CD14-positive monocyte (primary cell): ENCODE measurements at regions of chr2 and their contacts with region 1.

Region 1: DNA sequence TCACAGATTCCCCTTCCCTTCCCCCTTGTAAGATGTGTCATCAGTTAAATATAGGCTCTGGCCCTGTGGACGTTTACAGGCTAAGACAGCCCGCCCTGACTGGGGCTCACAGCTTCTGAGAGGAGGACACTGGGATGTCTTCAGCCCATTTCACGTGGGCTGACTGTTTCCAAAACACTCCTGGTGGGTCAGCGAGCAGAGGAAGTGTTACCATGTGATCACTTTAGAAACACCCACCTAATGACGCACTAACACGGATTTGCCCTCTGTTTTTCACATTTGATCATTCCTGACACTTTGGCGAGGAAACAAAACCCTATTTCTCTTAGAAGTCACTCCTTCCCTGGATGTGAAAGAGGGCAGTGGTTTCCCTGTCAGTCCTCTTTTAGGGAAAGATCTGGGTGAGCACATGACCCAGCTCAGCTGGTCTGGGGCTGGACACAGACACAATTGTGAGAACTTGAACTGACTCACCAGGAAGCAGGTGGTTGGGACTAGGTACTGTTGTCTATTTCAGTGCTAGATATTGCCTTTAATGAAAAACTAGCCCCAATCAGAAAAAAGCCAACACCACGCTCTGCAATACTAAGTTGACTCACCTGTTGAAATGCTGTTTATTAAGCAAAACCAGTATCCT is 38.8 kb downstream of the BMP10 start:
- DNase-seq: peak; percentile 95 to 98 (median 96)
- H3K4me3 ChIP-seq: peak overlapping the region in 1 of 3 experiments; percentile 29
- H3K4me3 Mint-ChIP-seq: peak overlapping the region; percentile 24 to 42
- H3K27ac ChIP-seq: peak overlapping the region; percentile 97 to 98
- H3K27ac Mint-ChIP-seq: peak overlapping the region; percentile 99 to 100 (median 99)
- H3K4me1 ChIP-seq: peaks cover 98 to 99% of the 10 kb centered on the region in 2 donors
- H3K4me1 Mint-ChIP-seq: peaks cover 96% of the 10 kb centered on the region
- H3K27me3 ChIP-seq: no peaks in the 10 kb centered on the region
- H3K27me3 Mint-ChIP-seq: no peaks in the 10 kb centered on the region
- CTCF ChIP-seq: no peak

Region 2: GRCh38 chr2:68467077-68467960 is 365.0 kb before region 1 on chr2 and contains the starts of genes APLF and FBXO48:
- intact Hi-C with region 1: loop called in 1 of 2 experiments (anchors 5 kb)
- DNase-seq: peak; percentile 98 to 99 (median 99)
- H3K4me3 ChIP-seq: peak within 1 kb of the TSS; percentile 78 to 99 (median 82)
- H3K4me3 Mint-ChIP-seq: peak within 1 kb of the TSS; percentile 90 to 96
- H3K27ac ChIP-seq: peak within 1 kb of the TSS; percentile 73 to 89
- H3K27ac Mint-ChIP-seq: peak within 1 kb of the TSS; percentile 92 to 96 (median 94)
- H3K4me1 ChIP-seq: peaks cover 20 to 29% of the 10 kb centered on the region in 2 donors
- H3K4me1 Mint-ChIP-seq: peaks cover 29% of the 10 kb centered on the region
- H3K27me3 ChIP-seq: no peaks in the 10 kb centered on the region
- H3K27me3 Mint-ChIP-seq: peaks cover 0 to 2% (median 1%) of the 10 kb centered on the region in 3 donors
- CTCF ChIP-seq: no peak
- polyA plus RNA-seq, gene APLF: 0.77 to 1.8 (median 1.2) TPM
- polyA plus RNA-seq, gene FBXO48: 0.08 to 0.85 (median 0.31) TPM

Region 3: DNA sequence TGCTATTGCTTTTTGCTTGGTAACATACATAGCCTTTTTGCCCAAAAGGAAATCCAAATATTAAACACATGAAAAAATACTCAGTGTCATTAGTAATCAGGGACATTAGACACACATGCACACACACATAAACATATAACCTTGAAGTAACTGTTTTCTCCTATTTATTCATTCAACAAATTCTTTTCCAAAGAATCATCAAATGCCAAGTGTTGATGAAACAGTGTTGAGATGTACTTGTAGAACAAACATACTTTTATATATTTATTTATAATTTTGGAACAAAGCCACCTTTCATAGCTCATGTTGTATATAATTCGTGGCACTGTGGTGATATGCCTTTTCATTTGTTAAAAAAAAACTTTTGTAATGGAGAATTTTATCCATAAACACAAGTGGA is 284.0 kb before region 1 on chr2:
- intact Hi-C with region 1: no loop called
- DNase-seq: no peak
- H3K4me3 ChIP-seq: no peak overlapping the region
- H3K4me3 Mint-ChIP-seq: no peak overlapping the region
- H3K27ac ChIP-seq: no peak overlapping the region
- H3K27ac Mint-ChIP-seq: no peak overlapping the region
- H3K4me1 ChIP-seq: no peaks in the 10 kb centered on the region
- H3K4me1 Mint-ChIP-seq: peaks cover 2% of the 10 kb centered on the region
- H3K27me3 ChIP-seq: no peaks in the 10 kb centered on the region
- H3K27me3 Mint-ChIP-seq: peaks cover 0 to 2% (median 0%) of the 10 kb centered on the region in 3 donors
- CTCF ChIP-seq: no peak

Region 4: GRCh38 chr2:68742626-68743415 is 89.5 kb before region 1 on chr2:
- intact Hi-C with region 1: loop called (anchors 5 kb)
- DNase-seq: peak in 2 of 3 donors; percentile 62 to 65
- H3K4me3 ChIP-seq: peak overlapping the region; percentile 5 to 83 (median 64)
- H3K4me3 Mint-ChIP-seq: peak overlapping the region; percentile 29 to 84
- H3K27ac ChIP-seq: peak overlapping the region; percentile 79 to 96
- H3K27ac Mint-ChIP-seq: peak overlapping the region; percentile 98 to 100 (median 98)
- H3K4me1 ChIP-seq: peaks cover 98 to 100% of the 10 kb centered on the region in 2 donors
- H3K4me1 Mint-ChIP-seq: peaks cover 97% of the 10 kb centered on the region
- H3K27me3 ChIP-seq: no peaks in the 10 kb centered on the region
- H3K27me3 Mint-ChIP-seq: peaks cover 0 to 3% (median 2%) of the 10 kb centered on the region in 3 donors
- CTCF ChIP-seq: no peak

Region 5: DNA sequence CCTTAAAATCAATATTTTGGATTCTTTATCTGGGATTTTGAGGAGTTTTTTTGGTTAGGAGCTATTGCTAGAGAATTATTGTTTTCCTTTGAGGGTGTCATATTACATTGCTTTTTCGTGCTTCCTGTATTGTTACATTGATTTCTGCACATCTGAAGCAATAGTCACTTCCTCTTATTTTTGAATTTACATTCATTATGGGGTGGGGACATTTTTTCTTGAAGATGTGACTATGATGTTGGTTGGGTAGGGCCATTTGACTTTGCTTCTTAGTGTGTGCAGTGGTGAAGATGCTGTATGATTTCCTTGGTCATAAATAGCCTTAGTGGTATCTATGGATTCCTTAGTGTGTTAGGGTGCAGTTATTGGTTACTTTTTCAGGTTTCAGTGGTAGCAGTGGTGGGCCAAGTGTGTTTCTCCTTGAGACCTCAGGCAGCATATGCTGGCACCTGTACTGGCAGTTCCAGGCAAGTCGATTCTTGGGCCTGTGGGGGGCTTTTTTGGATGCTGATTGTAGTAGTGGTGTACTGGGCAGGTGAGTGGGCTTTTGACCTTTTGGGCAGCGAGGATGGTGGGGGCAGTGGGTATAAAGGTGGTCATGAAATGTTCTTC is 36.0 kb before region 1 on chr2:
- intact Hi-C with region 1: loop called in 1 of 2 experiments (anchors 5 kb)
- DNase-seq: peak; percentile 74 to 88 (median 80)
- H3K4me3 ChIP-seq: peak overlapping the region in 2 of 3 experiments; percentile 22 to 67
- H3K4me3 Mint-ChIP-seq: peak overlapping the region; percentile 44 to 88
- H3K27ac ChIP-seq: peak overlapping the region; percentile 82 to 88
- H3K27ac Mint-ChIP-seq: peak overlapping the region; percentile 91 to 98 (median 97)
- H3K4me1 ChIP-seq: peaks cover 47 to 62% of the 10 kb centered on the region in 2 donors
- H3K4me1 Mint-ChIP-seq: peaks cover 76% of the 10 kb centered on the region
- H3K27me3 ChIP-seq: no peaks in the 10 kb centered on the region
- H3K27me3 Mint-ChIP-seq: peaks cover 0 to 4% (median 3%) of the 10 kb centered on the region in 3 donors
- CTCF ChIP-seq: no peak

Region 6: DNA sequence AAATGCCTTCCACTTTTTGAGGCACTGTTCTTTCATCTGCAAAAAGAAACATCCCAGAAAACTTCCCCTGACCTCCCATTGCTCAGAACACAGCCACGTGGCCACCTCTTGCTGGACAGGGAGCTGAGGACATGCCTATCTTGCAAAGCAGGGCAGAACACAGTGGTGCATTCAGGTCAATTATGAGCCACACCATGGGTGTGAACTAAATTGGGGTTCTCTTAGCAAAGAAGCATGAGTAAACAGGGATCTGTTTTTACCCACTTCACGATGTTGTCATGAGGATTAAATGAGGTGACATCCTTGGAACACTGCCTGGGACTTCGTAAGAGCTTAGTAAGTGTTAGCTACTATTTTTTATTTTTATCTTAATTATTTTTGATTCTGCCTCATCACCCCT is 13.7 kb after region 1 on chr2:
- intact Hi-C with region 1: no loop called
- DNase-seq: no peak
- H3K4me3 ChIP-seq: no peak overlapping the region
- H3K4me3 Mint-ChIP-seq: no peak overlapping the region
- H3K27ac ChIP-seq: no peak overlapping the region
- H3K27ac Mint-ChIP-seq: no peak overlapping the region
- H3K4me1 ChIP-seq: peaks cover 6 to 8% of the 10 kb centered on the region in 2 donors
- H3K4me1 Mint-ChIP-seq: peaks cover 13% of the 10 kb centered on the region
- H3K27me3 ChIP-seq: no peaks in the 10 kb centered on the region
- H3K27me3 Mint-ChIP-seq: peaks cover 0 to 3% (median 0%) of the 10 kb centered on the region in 3 donors
- CTCF ChIP-seq: no peak

Region 7: GRCh38 chr2:68909793-68910674 is 77.7 kb after region 1 on chr2:
- intact Hi-C with region 1: loop called (anchors 5 kb)
- DNase-seq: peak; percentile 60 to 75 (median 66)
- H3K4me3 ChIP-seq: no peak overlapping the region
- H3K4me3 Mint-ChIP-seq: no peak overlapping the region
- H3K27ac ChIP-seq: no peak overlapping the region
- H3K27ac Mint-ChIP-seq: no peak overlapping the region
- H3K4me1 ChIP-seq: peaks cover 28 to 31% of the 10 kb centered on the region in 2 donors
- H3K4me1 Mint-ChIP-seq: peaks cover 21% of the 10 kb centered on the region
- H3K27me3 ChIP-seq: no peaks in the 10 kb centered on the region
- H3K27me3 Mint-ChIP-seq: peaks cover 0 to 2% (median 0%) of the 10 kb centered on the region in 3 donors
- CTCF ChIP-seq: peak; percentile 95

Region 8: DNA sequence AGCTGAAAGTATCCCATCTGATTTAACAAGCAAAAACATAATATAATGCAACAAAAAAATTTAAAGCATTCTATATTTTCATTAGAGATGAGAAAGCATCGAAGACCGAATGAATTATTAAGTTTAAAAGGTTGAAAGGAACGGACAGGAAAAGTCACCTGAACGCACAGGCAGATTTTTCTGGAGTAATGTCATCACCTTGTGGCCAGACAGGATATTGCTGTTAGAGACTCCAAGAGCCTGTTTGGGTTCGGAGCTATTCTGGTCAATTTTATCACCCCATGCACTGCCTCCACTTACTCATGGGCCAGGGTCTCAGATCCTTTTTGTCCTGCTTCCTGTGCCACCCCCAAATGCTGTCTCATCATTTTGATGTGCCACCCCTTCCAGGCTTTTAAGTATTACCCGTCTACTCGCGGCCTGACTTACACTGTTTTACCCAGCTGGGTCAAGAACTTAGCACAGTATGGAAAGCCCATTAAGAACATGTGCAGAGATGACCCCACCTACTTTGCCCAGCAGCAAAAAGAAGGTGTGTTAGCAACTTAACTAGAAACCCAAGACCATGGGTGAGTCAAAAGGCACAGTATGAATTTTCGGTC is 93.0 kb after region 1 on chr2:
- intact Hi-C with region 1: loop called in 1 of 2 experiments (anchors 5 kb)
- DNase-seq: peak in 2 of 3 donors; percentile 53 to 56
- H3K4me3 ChIP-seq: no peak overlapping the region
- H3K4me3 Mint-ChIP-seq: no peak overlapping the region
- H3K27ac ChIP-seq: no peak overlapping the region
- H3K27ac Mint-ChIP-seq: no peak overlapping the region
- H3K4me1 ChIP-seq: no peaks in the 10 kb centered on the region
- H3K4me1 Mint-ChIP-seq: peaks cover 3% of the 10 kb centered on the region
- H3K27me3 ChIP-seq: no peaks in the 10 kb centered on the region
- H3K27me3 Mint-ChIP-seq: peaks cover 1 to 5% (median 3%) of the 10 kb centered on the region in 3 donors
- CTCF ChIP-seq: peak; percentile 97